Gastrocnemius medialis (tissue), 4 donors: ENCODE measurements at regions of chr10 and their contacts with region 1.

Region 1: DNA sequence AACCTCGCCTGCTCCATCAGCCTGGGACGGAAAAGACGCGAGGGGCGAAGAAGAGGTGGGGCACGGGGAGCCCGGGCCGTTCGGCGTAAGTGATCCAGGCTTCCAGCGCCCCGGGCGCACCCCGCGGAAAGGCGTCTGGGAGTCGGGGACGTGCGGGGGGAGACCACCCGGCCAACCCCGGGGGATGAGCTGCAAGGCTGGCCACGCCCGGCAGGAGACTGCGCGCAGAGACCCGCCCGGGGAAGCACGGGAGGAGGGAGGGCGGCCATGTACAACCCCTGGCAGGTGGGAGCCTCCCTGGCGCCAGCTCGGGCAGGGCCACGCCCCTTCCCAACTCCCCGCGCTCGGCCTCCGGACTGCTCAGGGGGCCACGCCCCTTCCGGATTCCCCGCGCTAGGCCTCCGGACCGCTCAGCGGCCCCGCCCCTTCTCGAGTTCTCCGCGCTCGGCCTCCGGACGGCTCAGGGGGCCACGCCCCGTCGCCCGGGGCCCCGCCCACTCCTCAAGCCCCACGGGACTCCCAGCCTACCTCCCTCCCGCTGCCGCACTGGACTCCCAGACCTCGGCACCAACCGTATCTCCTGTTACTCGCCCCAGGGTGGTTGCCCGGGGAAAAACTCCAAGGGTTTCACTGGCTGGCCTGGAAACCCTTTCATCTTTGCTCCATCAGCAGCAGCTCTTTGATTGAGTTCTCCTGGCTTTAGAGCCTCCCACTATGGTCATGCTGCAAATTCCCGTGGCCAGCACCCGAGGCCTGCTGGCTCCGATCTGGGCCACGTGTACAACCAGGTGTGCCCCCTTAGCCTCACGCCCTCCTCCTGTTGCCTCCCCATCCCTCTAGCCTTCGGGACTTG is 284.4 kb downstream of the ZEB1 start:
- DNase-seq: peak; percentile 95 to 97
- ATAC-seq: peak; percentile 75
- H3K4me3 ChIP-seq: peak overlapping the region; percentile 68 to 97 (median 76)
- H3K27ac ChIP-seq: peak overlapping the region; percentile 92 to 99 (median 96)
- H3K4me1 ChIP-seq: peaks cover 14 to 19% of the 10 kb centered on the region in 2 donors
- H3K27me3 ChIP-seq: no peaks in the 10 kb centered on the region
- CTCF ChIP-seq: peak in 3 of 5 experiments; percentile 13 to 34 (median 23)
- POLR2A ChIP-seq: peak; percentile 85 to 86

Region 2: GRCh38 chr10:31404640-31405039 is 198.8 kb before region 1 on chr10:
- in situ Hi-C with region 1: no loop called
- intact Hi-C with region 1: no loop called
- DNase-seq: no peak
- ATAC-seq: peak; percentile 44 to 60
- H3K4me3 ChIP-seq: no peak overlapping the region
- H3K27ac ChIP-seq: peak overlapping the region in 3 of 4 donors; percentile 2 to 90 (median 29)
- H3K4me1 ChIP-seq: peaks cover 48 to 53% of the 10 kb centered on the region in 2 donors
- H3K27me3 ChIP-seq: no peaks in the 10 kb centered on the region
- CTCF ChIP-seq: no peak
- POLR2A ChIP-seq: no peak

Region 3: GRCh38 chr10:31451766-31452165 is 151.7 kb before region 1 on chr10:
- in situ Hi-C with region 1: no loop called
- intact Hi-C with region 1: no loop called
- DNase-seq: no peak
- ATAC-seq: peak; percentile 47 to 58
- H3K4me3 ChIP-seq: peak overlapping the region in 1 of 4 donors; percentile 8
- H3K27ac ChIP-seq: peak overlapping the region; percentile 32 to 67 (median 60)
- H3K4me1 ChIP-seq: peaks cover 33 to 35% of the 10 kb centered on the region in 2 donors
- H3K27me3 ChIP-seq: no peaks in the 10 kb centered on the region
- CTCF ChIP-seq: no peak
- POLR2A ChIP-seq: no peak

Region 4: DNA sequence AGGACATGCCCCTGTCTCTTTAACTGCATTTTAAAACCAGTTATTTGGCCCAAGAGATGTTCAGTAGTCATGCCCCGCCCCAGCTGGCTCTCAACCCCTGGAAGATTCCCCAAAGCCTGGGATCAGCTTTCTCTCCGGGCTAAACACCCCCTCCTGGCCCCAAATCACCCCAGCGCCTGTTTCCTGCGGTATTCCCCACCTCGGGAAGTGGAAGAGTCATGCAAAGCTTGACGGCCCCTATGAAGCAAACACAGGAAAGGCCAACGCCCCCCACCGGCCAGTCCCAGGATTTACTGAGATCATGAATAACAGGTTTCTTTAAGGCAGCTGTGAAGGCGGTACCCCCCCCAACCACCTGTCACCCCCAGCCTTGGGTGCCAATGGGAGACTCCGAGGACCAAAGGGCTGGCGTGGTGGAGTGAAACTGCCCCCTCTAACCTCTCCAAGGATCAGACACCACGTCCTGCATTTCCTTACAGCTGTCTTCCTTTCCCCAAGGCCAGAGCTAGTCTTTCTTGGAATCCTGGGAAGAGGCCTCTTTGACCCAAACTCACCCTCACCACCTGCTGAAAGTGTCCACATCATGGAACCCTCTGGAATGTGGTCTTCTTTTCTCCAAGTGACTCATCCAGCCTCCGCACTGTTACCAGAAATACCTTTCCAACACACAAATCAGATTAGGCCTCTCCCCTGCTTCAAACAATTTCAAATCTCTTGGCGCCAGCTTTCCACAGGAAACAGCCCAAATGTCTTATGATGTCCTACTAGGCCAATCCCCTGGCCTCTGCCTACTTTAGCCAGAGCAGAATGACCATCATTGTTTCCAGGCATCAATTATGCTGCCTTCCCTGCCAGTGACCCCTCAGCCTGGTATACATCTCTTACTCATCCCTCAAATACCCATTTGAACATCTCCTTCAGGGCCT is 17.0 kb after region 1 on chr10:
- in situ Hi-C with region 1: no loop called
- intact Hi-C with region 1: loop called (anchors 1 kb)
- DNase-seq: peak; percentile 59 to 80
- ATAC-seq: peak; percentile 31 to 49
- H3K4me3 ChIP-seq: no peak overlapping the region
- H3K27ac ChIP-seq: peak overlapping the region; percentile 42 to 69 (median 59)
- H3K4me1 ChIP-seq: peaks cover 30 to 35% of the 10 kb centered on the region in 2 donors
- H3K27me3 ChIP-seq: no peaks in the 10 kb centered on the region
- CTCF ChIP-seq: peak; percentile 22 to 45 (median 35)
- POLR2A ChIP-seq: no peak

Region 5: GRCh38 chr10:31650010-31650409 is 46.5 kb after region 1 on chr10:
- in situ Hi-C with region 1: no loop called
- intact Hi-C with region 1: loop called (anchors 2 kb)
- DNase-seq: peak; percentile 81 to 84
- ATAC-seq: peak; percentile 98 to 99
- H3K4me3 ChIP-seq: peak overlapping the region; percentile 37 to 45 (median 39)
- H3K27ac ChIP-seq: peak overlapping the region; percentile 71 to 79 (median 72)
- H3K4me1 ChIP-seq: peaks cover 6 to 12% of the 10 kb centered on the region in 2 donors
- H3K27me3 ChIP-seq: no peaks in the 10 kb centered on the region
- CTCF ChIP-seq: no peak
- POLR2A ChIP-seq: no peak

Region 6: GRCh38 chr10:31697271-31698180 is 94.1 kb after region 1 on chr10:
- in situ Hi-C with region 1: loop called in 1 of 4 experiments (anchors 10 kb)
- intact Hi-C with region 1: loop called (anchors 2 kb)
- DNase-seq: peak; percentile 64 to 77
- ATAC-seq: peak; percentile 63 to 70
- H3K4me3 ChIP-seq: peak overlapping the region; percentile 10 to 45 (median 22)
- H3K27ac ChIP-seq: peak overlapping the region; percentile 78 to 85 (median 82)
- H3K4me1 ChIP-seq: peaks cover 40 to 51% of the 10 kb centered on the region in 2 donors
- H3K27me3 ChIP-seq: no peaks in the 10 kb centered on the region
- CTCF ChIP-seq: no peak
- POLR2A ChIP-seq: peak in 1 of 2 donors; percentile 20

Region 7: GRCh38 chr10:31759799-31760626 is 156.6 kb after region 1 on chr10:
- in situ Hi-C with region 1: no loop called
- intact Hi-C with region 1: loop called (anchors 1 kb)
- DNase-seq: peak; percentile 95
- ATAC-seq: peak; percentile 88 to 92
- H3K4me3 ChIP-seq: peak overlapping the region; percentile 67 to 89 (median 83)
- H3K27ac ChIP-seq: peak overlapping the region; percentile 95 to 97 (median 96)
- H3K4me1 ChIP-seq: peaks cover 16 to 33% of the 10 kb centered on the region in 2 donors
- H3K27me3 ChIP-seq: no peaks in the 10 kb centered on the region
- CTCF ChIP-seq: no peak
- POLR2A ChIP-seq: peak; percentile 88 to 93